Dendritic cell treated with granulocyte-macrophage colony-stimulating factor and Interleukin-4, amounts not matched to agents 40 ng/mL and 50 ng/mL, for 4 days (primary cell): ENCODE measurements at regions of chr2 and their contacts with region 1.

Region 1: GRCh38 chr2:55771612-55772011 is 78.0 kb upstream of the PNPT1 start:
- H3K4me3 Mint-ChIP-seq: no peak overlapping the region
- H3K27ac Mint-ChIP-seq: no peak overlapping the region
- H3K4me1 Mint-ChIP-seq: no peaks in the 10 kb centered on the region
- H3K27me3 Mint-ChIP-seq: no peaks in the 10 kb centered on the region

Region 2: DNA sequence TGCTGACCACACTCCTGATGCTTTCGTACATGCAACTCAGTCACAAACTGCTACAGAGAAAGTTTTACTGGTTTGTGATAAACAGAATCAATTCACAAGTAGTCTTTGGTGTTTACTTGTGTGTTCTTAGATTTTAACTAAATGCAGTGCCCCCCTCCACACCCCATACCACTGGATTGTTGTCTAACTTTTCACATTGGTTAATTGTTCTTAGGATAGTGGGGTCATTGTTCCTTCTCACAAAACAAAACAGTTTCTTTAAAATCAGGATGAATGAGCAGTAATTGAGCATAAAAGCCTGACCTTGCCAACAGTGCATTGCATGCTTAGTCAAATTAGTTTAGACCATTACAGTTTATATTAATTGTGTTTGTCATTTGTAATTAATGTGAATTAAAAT is 63.9 kb before region 1 on chr2:
- intact Hi-C with region 1: no loop called
- H3K4me3 Mint-ChIP-seq: no peak overlapping the region
- H3K27ac Mint-ChIP-seq: no peak overlapping the region
- H3K4me1 Mint-ChIP-seq: no peaks in the 10 kb centered on the region
- H3K27me3 Mint-ChIP-seq: peaks cover 4% of the 10 kb centered on the region

Region 3: GRCh38 chr2:55961318-55961911 is 189.8 kb after region 1 on chr2:
- intact Hi-C with region 1: loop called (anchors 2 kb)
- H3K4me3 Mint-ChIP-seq: no peak overlapping the region
- H3K27ac Mint-ChIP-seq: no peak overlapping the region
- H3K4me1 Mint-ChIP-seq: no peaks in the 10 kb centered on the region
- H3K27me3 Mint-ChIP-seq: peaks cover 6% of the 10 kb centered on the region

Region 4: DNA sequence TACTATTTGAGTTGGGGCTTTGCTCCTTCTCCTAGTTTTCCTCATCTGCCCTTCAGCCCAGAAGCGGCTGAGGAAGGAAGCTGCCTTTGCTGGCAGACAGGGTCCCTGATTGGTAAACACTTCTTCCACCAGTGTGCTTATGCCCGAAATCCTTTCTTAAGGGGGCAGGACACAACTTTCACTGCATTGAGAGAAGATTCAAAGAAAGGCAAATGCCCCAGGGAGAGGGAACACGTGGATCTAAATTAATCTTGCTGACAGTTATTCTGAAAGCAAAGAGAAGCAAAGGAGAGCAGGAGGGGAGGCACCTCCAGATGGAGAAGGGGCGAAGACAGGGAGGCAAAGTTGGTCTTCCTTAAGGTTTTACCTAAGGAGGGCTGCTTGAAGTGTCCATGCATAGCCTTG is 244.1 kb after region 1 on chr2:
- intact Hi-C with region 1: loop called (anchors 5 kb)
- H3K4me3 Mint-ChIP-seq: no peak overlapping the region
- H3K27ac Mint-ChIP-seq: no peak overlapping the region
- H3K4me1 Mint-ChIP-seq: no peaks in the 10 kb centered on the region
- H3K27me3 Mint-ChIP-seq: peaks cover 3% of the 10 kb centered on the region

Region 5: GRCh38 chr2:56132138-56132537 is 360.5 kb after region 1 on chr2:
- intact Hi-C with region 1: loop called (anchors 5 kb)
- H3K4me3 Mint-ChIP-seq: no peak overlapping the region
- H3K27ac Mint-ChIP-seq: no peak overlapping the region
- H3K4me1 Mint-ChIP-seq: peaks cover 4% of the 10 kb centered on the region
- H3K27me3 Mint-ChIP-seq: no peaks in the 10 kb centered on the region